ENCODE measurements at regions of chr20 and their contacts with region 1.

Region 1: GRCh38 chr20:5529331-5530148 is 212.8 kb upstream of the PROKR2 start:
- DNase-seq: peak; percentile 89 to 90
- H3K4me3 ChIP-seq: peak overlapping the region; percentile 36
- H3K4me3 Mint-ChIP-seq: peak overlapping the region; percentile 64
- H3K27ac Mint-ChIP-seq: no peak overlapping the region
- H3K4me1 ChIP-seq: 0 out of 2 replicates have a peak, but pooled peaks cover 3% of the 10 kb centered on the region
- H3K4me1 Mint-ChIP-seq: peaks cover 27% of the 10 kb centered on the region
- H3K27me3 ChIP-seq: no peaks in the 10 kb centered on the region; the same call in 1 of the 2 replicates
- H3K27me3 Mint-ChIP-seq: no peaks in the 10 kb centered on the region
- CTCF ChIP-seq: peak; percentile 78 to 95

Region 2: GRCh38 chr20:5205348-5206210 is 324.0 kb before region 1 on chr20:
- CTCF ChIA-PET with region 1: no interaction called
- POLR2A ChIA-PET with region 1: no interaction called
- intact Hi-C with region 1: loop called (anchors 5 kb)
- DNase-seq: peak; percentile 84 to 86
- H3K4me3 ChIP-seq: no peak overlapping the region
- H3K4me3 Mint-ChIP-seq: no peak overlapping the region
- H3K27ac Mint-ChIP-seq: no peak overlapping the region
- H3K4me1 ChIP-seq: no peaks in the 10 kb centered on the region
- H3K4me1 Mint-ChIP-seq: no peaks in the 10 kb centered on the region
- H3K27me3 ChIP-seq: no peaks in the 10 kb centered on the region
- H3K27me3 Mint-ChIP-seq: no peaks in the 10 kb centered on the region
- CTCF ChIP-seq: peak; percentile 92 to 95

Region 3: DNA sequence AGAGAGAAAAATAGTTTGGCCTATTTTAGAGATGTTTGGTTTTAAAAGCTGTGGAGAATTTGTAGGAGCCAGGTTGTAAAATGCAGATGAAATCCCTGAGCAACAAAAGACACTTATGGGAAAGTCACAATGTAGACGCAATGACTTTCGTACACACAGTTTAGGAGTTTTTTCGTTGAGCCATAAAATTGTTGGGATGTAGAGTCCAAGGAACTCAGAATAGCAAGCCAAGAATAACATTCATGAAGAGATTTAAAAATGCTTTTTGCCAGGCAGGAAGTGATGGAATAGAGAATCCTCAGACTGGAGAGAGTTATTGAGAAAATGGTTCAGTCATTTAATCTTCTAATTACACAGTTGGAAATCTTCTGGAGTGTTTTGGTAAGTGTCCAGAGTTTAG is 201.3 kb before region 1 on chr20:
- CTCF ChIA-PET with region 1: no interaction called
- POLR2A ChIA-PET with region 1: no interaction called
- intact Hi-C with region 1: no loop called
- DNase-seq: no peak
- H3K4me3 ChIP-seq: no peak overlapping the region
- H3K4me3 Mint-ChIP-seq: no peak overlapping the region
- H3K27ac Mint-ChIP-seq: no peak overlapping the region
- H3K4me1 ChIP-seq: no peaks in the 10 kb centered on the region
- H3K4me1 Mint-ChIP-seq: no peaks in the 10 kb centered on the region
- H3K27me3 ChIP-seq: no peaks in the 10 kb centered on the region; the same call in 1 of the 2 replicates
- H3K27me3 Mint-ChIP-seq: peaks cover 15% of the 10 kb centered on the region
- CTCF ChIP-seq: no peak

Region 4: DNA sequence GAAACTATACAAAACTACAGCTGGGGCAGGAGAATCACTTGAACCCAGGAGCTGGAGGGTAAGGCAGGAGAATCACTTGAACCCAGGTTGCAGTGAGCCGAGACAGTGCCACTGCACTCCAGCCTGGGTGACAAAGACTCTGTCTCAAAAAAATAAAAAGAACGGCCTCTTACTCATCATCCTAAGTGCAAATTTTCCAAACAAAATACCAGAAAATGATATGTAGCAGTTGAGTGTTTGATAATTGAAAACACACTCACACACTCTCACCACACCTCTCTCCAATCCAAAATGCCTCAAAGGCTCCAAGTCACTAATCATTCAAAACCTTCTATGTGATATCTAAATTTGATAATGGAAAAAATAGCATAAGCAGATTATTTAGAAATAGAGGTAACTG is 22.1 kb after region 1 on chr20:
- CTCF ChIA-PET with region 1: interaction called, 28 read pairs
- POLR2A ChIA-PET with region 1: no interaction called
- intact Hi-C with region 1: loop called (anchors 1 kb)
- DNase-seq: no peak
- H3K4me3 ChIP-seq: no peak overlapping the region
- H3K4me3 Mint-ChIP-seq: no peak overlapping the region
- H3K27ac Mint-ChIP-seq: no peak overlapping the region
- H3K4me1 ChIP-seq: no peaks in the 10 kb centered on the region; the same call in 1 of the 2 replicates
- H3K4me1 Mint-ChIP-seq: peaks cover 6% of the 10 kb centered on the region
- H3K27me3 ChIP-seq: no peaks in the 10 kb centered on the region
- H3K27me3 Mint-ChIP-seq: no peaks in the 10 kb centered on the region
- CTCF ChIP-seq: no peak

Region 5: DNA sequence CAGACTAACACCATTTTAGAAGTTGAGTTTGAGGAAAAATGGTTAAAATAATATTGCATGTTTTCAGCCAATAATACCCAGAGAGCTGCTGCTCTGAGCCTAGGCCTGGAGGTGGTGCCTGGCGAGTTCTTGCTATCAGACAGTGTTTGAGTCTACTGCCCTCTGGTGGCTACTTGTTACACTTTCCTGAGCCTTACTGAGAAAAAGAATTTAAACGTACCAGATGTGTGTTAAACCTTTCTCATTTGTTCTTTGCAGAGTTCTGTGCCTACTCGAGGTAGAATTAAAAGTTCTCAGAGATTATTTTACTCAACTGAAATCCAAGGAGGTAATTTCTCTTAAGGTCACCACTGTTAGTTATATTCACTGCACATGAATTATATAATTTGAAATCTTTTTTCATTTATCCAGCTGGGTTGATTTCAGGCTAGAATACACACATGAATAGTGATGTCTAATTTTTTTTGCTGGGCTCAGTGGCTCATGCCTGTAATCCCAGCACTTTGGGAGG is 258.9 kb after region 1 on chr20:
- CTCF ChIA-PET with region 1: interaction called, 26 read pairs
- POLR2A ChIA-PET with region 1: no interaction called
- intact Hi-C with region 1: loop called (anchors 1 kb)
- DNase-seq: peak; percentile 82 to 83
- H3K4me3 ChIP-seq: no peak overlapping the region
- H3K4me3 Mint-ChIP-seq: no peak overlapping the region
- H3K27ac Mint-ChIP-seq: no peak overlapping the region
- H3K4me1 ChIP-seq: peaks cover 8% of the 10 kb centered on the region
- H3K4me1 Mint-ChIP-seq: peaks cover 7% of the 10 kb centered on the region
- H3K27me3 ChIP-seq: no peaks in the 10 kb centered on the region
- H3K27me3 Mint-ChIP-seq: no peaks in the 10 kb centered on the region
- CTCF ChIP-seq: peak; percentile 86 to 96

Region 6: GRCh38 chr20:5950271-5951031 is 420.9 kb after region 1 on chr20 and contains the starts of genes MCM8 and TRMT6:
- CTCF ChIA-PET with region 1: interaction called, 7 read pairs
- POLR2A ChIA-PET with region 1: interaction called, 8 read pairs
- intact Hi-C with region 1: loop called (anchors 1 kb)
- DNase-seq: peak; percentile 98 to 99
- H3K4me3 ChIP-seq: peak within 1 kb of the TSS; percentile 60
- H3K4me3 Mint-ChIP-seq: peak within 1 kb of the TSS; percentile 99
- H3K27ac Mint-ChIP-seq: peak within 1 kb of the TSS; percentile 86
- H3K4me1 ChIP-seq: peaks cover 15% of the 10 kb centered on the region
- H3K4me1 Mint-ChIP-seq: no peaks in the 10 kb centered on the region
- H3K27me3 ChIP-seq: no peaks in the 10 kb centered on the region
- H3K27me3 Mint-ChIP-seq: no peaks in the 10 kb centered on the region
- CTCF ChIP-seq: no peak
- total RNA-seq, gene MCM8: 36.4 and 38.4 TPM in 2 replicates
- total RNA-seq, gene TRMT6: 30.0 and 35.5 TPM in 2 replicates

Region 7: DNA sequence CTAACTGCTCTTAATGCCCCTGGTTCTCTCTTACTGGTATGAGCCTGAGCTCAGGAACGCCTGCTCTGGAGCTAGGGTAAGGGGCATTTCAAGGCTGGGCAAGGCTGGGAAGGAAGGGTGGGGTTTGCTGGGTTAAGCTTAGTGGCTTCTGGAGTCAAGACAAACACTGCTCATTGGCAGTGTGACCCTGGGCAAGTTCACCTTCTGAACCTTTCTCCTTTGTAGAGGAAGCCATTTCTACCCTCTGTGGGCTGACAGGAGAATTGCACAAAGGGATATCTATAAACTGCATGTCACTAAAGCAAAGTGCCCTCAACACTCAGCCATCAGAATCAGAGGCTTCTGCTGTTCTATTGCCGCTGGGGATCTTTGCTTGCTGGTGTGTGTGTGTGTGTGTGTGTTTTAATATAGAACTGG is 544.6 kb after region 1 on chr20:
- CTCF ChIA-PET with region 1: no interaction called
- POLR2A ChIA-PET with region 1: no interaction called
- intact Hi-C with region 1: loop called (anchors 1 kb)
- DNase-seq: peak; percentile 63 to 66
- H3K4me3 ChIP-seq: no peak overlapping the region
- H3K4me3 Mint-ChIP-seq: no peak overlapping the region
- H3K27ac Mint-ChIP-seq: peak overlapping the region; percentile 60
- H3K4me1 ChIP-seq: peaks cover 35% of the 10 kb centered on the region
- H3K4me1 Mint-ChIP-seq: peaks cover 10% of the 10 kb centered on the region
- H3K27me3 ChIP-seq: no peaks in the 10 kb centered on the region
- H3K27me3 Mint-ChIP-seq: no peaks in the 10 kb centered on the region
- CTCF ChIP-seq: peak; percentile 65 to 69